Activated CD8-positive, alpha-beta T cell treated with anti-CD3 and anti-CD28 coated beads, Interleukin-2, amount 10 ng/mL, durations not matched to agents 7 days and 5 days (primary cell): ENCODE measurements at regions of chr9 and their contacts with region 1.

Region 1: GRCh38 chr9:89602978-89603766 is 1.6 kb upstream of the GADD45G start:
- DNase-seq: peak; percentile 94
- ATAC-seq: peak; percentile 27
- H3K4me3 Mint-ChIP-seq: peak overlapping the region; percentile 79
- H3K27ac Mint-ChIP-seq: peak overlapping the region; percentile 53
- H3K4me1 Mint-ChIP-seq: peaks cover 31% of the 10 kb centered on the region
- H3K27me3 Mint-ChIP-seq: peaks cover 18% of the 10 kb centered on the region

Region 2: DNA sequence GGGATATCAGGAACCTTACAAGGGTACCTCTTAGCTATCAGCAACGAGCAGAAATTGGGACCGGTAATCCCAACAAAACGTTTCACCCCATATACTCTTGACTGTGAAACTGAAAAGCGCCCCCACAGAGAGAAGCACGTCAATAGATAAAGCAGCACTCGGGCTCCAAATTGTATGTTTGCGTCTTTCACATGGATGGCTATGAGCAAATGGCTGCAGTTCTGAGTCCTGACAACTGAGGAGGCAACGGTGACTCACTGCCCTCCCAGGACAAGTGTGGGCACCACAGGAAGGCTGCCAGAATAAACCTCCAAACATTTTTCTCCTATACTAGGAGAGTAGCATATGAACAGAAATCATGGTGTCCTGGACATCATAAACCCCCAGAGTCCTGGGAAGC is 141.9 kb before region 1 on chr9:
- CTCF ChIA-PET with region 1: no interaction called
- POLR2A ChIA-PET with region 1: no interaction called
- DNase-seq: no peak
- ATAC-seq: no peak
- H3K4me3 Mint-ChIP-seq: no peak overlapping the region
- H3K27ac Mint-ChIP-seq: peak overlapping the region; percentile 96
- H3K4me1 Mint-ChIP-seq: peaks cover 98% of the 10 kb centered on the region
- H3K27me3 Mint-ChIP-seq: no peaks in the 10 kb centered on the region

Region 3: DNA sequence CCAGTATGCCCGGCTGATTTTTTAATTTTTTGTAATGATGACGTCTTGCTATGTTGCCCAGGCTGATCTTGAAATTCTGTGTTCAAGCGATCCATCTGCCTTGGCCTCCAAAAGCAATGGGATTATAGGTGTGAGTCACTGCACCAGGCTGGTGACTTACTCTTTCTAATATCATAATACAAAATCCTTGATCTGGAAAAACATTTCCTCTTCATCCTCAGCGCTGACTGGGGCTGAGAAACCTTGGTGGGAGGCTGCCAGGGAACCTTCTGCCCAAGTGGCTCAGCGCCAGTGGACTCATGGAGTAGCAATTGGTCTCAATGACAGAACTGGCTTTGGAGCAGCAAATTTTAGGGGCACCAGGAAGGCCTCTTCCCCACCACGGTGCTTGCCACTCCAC is 87.8 kb before region 1 on chr9:
- CTCF ChIA-PET with region 1: no interaction called
- POLR2A ChIA-PET with region 1: no interaction called
- DNase-seq: no peak
- ATAC-seq: no peak
- H3K4me3 Mint-ChIP-seq: no peak overlapping the region
- H3K27ac Mint-ChIP-seq: no peak overlapping the region
- H3K4me1 Mint-ChIP-seq: peaks cover 55% of the 10 kb centered on the region
- H3K27me3 Mint-ChIP-seq: no peaks in the 10 kb centered on the region

Region 4: DNA sequence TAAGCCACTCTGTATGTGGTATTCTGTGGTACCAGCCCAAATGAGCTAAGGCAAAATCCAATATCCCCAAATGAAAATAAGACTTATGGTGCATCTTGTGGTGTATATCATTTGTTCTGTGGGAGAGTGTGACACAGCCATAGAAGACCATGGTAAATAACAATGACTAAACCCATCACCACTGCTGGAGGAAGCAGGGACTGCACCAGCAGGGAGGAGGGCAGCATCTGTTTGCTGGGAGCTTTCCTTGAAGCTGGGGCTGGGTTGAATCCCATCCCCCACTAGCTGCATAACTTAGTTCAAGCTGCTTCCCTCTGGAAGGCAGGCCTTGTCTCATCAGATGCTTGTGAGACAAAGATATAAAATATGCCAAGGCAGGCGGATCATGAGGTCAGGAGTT is 15.8 kb after region 1 on chr9:
- CTCF ChIA-PET with region 1: interaction called, 12 read pairs
- POLR2A ChIA-PET with region 1: no interaction called
- DNase-seq: no peak
- ATAC-seq: no peak
- H3K4me3 Mint-ChIP-seq: no peak overlapping the region
- H3K27ac Mint-ChIP-seq: no peak overlapping the region
- H3K4me1 Mint-ChIP-seq: peaks cover 12% of the 10 kb centered on the region
- H3K27me3 Mint-ChIP-seq: no peaks in the 10 kb centered on the region

Region 5: DNA sequence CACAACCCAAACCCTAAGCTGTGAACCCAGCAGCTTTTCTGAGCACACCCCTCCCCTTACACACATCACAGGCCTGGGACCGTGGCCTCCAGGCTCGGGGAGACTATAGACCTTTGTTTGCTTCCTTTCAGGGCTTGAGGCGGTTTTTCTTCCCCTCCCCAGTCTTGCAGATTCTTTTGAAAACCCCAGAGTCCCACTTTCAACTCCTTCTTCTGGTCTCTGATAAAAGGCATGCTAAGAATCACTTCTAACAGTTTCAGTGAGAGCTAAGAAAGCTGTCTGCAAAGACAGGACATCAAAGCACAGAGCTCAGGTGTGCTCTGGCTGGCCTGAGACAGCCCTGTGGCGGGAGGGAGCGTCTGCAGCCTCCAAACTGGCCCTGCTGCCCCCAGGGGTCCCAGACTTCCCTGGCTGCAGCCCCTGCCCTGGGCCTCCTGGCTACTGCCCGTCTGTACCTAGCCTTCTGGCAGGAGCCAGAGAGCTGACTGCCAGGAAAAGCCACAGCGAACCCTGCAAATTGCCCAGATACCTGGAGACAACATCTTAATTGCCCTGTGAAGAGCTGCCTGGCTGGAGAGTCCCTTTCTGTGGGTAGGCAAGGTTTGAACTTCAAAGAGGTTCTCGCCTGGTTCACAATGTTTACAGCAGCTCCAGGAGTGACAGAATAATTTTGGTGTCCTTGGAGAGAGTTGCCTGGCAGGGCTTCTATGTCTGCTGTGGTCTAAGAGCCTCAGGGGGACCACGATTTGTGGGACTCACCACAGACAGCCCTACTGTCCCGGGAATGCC is 140.6 kb after region 1 on chr9:
- CTCF ChIA-PET with region 1: interaction called, 33 read pairs
- POLR2A ChIA-PET with region 1: interaction called, 23 read pairs
- DNase-seq: peak; percentile 91
- ATAC-seq: peak; percentile 86
- H3K4me3 Mint-ChIP-seq: peak overlapping the region; percentile 67
- H3K27ac Mint-ChIP-seq: peak overlapping the region; percentile 92
- H3K4me1 Mint-ChIP-seq: peaks cover 91% of the 10 kb centered on the region
- H3K27me3 Mint-ChIP-seq: no peaks in the 10 kb centered on the region

Region 6: GRCh38 chr9:89919169-89919681 is 316.1 kb after region 1 on chr9:
- CTCF ChIA-PET with region 1: interaction called, 106 read pairs
- POLR2A ChIA-PET with region 1: interaction called, 3 read pairs
- DNase-seq: peak; percentile 67
- ATAC-seq: peak; percentile 88
- H3K4me3 Mint-ChIP-seq: no peak overlapping the region
- H3K27ac Mint-ChIP-seq: no peak overlapping the region
- H3K4me1 Mint-ChIP-seq: peaks cover 11% of the 10 kb centered on the region
- H3K27me3 Mint-ChIP-seq: peaks cover 28% of the 10 kb centered on the region

Region 7: DNA sequence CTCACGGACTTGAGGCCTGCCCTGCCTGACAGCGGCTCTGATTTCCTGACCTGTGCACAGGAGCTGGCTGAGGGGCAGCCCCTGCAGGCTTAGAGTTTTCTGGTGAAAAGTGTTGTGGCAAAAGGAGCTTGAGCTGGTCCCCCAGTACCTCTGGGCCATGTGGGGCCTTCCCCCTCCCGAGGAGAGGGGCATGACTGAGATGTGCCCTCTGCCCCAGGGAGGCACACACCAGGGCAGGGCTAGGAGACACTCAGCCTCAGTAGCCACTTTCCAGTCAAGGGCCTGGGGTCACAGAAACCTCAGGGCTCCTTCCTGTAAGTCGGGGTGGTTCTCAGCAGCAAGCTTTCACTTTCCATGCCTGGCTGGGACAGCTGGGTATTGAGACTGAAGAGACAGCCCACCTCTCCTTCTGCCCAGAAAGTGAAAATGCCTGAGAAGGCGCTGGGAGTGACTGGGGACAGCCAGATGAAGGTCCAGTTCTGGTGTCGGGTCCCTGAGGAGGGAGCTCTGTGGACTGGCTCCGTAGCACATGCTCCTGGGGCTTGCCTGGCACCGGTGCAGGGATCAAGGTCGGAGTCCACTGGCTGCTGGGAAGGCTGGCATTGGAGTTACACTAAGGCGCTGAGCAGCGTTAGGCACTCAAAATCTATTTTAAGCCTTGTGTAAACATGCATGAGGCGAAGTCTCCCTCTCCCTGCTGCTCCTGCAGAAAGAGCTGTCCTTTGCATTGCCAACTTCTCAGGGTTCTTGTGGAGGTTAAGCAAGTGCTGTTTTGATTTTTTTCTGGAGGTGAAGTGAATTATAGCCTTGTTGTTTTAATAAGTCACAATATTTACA is 396.6 kb after region 1 on chr9:
- CTCF ChIA-PET with region 1: interaction called, 34 read pairs
- POLR2A ChIA-PET with region 1: interaction called, 3 read pairs
- DNase-seq: peak; percentile 86
- ATAC-seq: peak; percentile 94
- H3K4me3 Mint-ChIP-seq: peak overlapping the region; percentile 74
- H3K27ac Mint-ChIP-seq: peak overlapping the region; percentile 92
- H3K4me1 Mint-ChIP-seq: peaks cover 47% of the 10 kb centered on the region
- H3K27me3 Mint-ChIP-seq: peaks cover 2% of the 10 kb centered on the region

Region 8: DNA sequence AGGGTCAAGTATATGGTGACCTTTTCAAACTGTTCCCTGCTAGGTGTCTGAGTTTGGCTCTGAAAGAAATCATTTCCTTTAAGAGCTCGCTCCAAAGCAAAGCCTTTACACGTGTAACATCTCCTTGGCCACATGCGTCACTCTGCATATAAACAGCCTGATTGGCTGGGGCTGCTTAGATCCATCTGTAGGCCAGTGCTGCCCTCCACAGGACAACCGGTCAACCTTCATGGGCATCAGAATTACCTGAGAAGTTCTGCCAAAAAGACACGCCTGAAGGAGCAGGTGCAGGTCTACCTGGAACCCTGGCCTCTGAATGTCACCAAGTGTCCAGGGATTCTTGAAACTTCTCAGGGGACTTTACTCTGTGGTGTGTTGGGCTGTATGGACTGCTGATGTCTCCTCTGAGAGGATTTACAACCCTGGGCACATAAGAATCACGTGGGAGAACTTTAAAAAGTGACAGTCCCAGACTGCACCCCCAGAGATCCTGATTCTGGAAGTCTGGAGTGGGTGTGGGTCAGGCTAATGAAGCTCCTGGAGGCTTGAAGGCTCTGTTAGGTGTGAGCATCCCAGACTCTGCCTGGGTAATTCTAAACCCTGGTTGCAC is 499.2 kb after region 1 on chr9:
- CTCF ChIA-PET with region 1: interaction called, 287 read pairs
- POLR2A ChIA-PET with region 1: interaction called, 3 read pairs
- DNase-seq: peak; percentile 87
- ATAC-seq: peak; percentile 98
- H3K4me3 Mint-ChIP-seq: no peak overlapping the region
- H3K27ac Mint-ChIP-seq: no peak overlapping the region
- H3K4me1 Mint-ChIP-seq: peaks cover 20% of the 10 kb centered on the region
- H3K27me3 Mint-ChIP-seq: peaks cover 11% of the 10 kb centered on the region